ENCODE measurements at regions of chr5 and their contacts with region 1.

Region 1: GRCh38 chr5:177403792-177404640 is 3.6 kb upstream of the PFN3 start:
- DNase-seq: peak; percentile 83
- H3K4me3 ChIP-seq: peak overlapping the region; percentile 62
- H3K27ac ChIP-seq: no peak overlapping the region
- H3K4me1 ChIP-seq: peaks cover 18% of the 10 kb centered on the region
- CTCF ChIP-seq: peak; percentile 78

Region 2: GRCh38 chr5:176985516-176985915 is 418.5 kb before region 1 on chr5:
- CTCF ChIA-PET with region 1: no interaction called
- POLR2A ChIA-PET with region 1: no interaction called
- intact Hi-C with region 1: no loop called
- DNase-seq: peak; percentile 92
- H3K4me3 ChIP-seq: peak overlapping the region; percentile 50
- H3K27ac ChIP-seq: peak overlapping the region; percentile 95
- H3K4me1 ChIP-seq: peaks cover 66% of the 10 kb centered on the region
- CTCF ChIP-seq: no peak

Region 3: GRCh38 chr5:177362610-177363507 is 41.2 kb before region 1 on chr5:
- CTCF ChIA-PET with region 1: interaction called, 10 read pairs
- POLR2A ChIA-PET with region 1: no interaction called
- intact Hi-C with region 1: no loop called
- DNase-seq: peak; percentile 48
- H3K4me3 ChIP-seq: peak overlapping the region; percentile 60
- H3K27ac ChIP-seq: peak overlapping the region; percentile 84
- H3K4me1 ChIP-seq: peaks cover 62% of the 10 kb centered on the region
- CTCF ChIP-seq: no peak

Region 4: DNA sequence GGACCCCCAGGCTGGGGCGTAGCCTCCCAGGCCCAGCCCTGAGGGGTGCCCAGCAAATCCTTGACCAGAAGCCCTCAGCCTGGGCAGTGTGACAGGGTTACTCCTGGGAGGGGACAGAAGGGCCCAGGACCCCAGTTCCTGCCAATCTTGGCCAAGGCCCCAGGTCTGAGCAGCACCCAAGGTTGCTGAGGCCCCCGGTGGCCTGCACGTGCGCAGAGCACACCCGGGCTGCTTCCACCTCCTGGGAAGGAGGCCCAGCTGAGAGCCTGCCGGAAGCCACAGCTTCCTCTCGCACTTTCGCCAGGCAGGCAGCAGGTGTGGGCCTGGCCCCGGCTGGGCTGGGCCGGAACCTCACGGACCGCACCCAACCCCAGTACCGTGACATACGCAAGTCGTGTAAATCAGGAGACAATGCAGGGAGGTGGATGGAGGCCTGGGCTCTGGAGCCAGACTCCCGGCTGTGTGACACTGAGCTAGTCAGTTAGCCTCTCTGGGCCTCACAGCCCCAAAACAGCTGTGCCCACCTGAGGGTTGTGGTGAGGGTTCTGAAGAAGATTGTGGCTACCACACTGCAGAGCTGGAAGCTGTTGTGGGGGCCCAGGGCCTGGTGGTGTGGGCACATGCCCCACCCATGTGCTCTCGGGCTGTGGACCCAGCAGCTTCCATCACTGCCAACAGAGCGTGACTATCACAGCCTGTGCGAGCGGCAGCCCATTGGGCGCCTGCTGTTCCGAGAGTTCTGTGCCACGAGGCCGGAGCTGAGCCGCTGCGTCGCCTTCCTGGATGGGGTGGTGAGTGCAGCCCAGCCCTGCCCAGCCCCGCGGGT is 27.5 kb after region 1 on chr5:
- CTCF ChIA-PET with region 1: interaction called, 10 read pairs
- POLR2A ChIA-PET with region 1: interaction called, 10 read pairs
- intact Hi-C with region 1: loop called (anchors 1 kb)
- DNase-seq: peak; percentile 91
- H3K4me3 ChIP-seq: peak overlapping the region; percentile 77
- H3K27ac ChIP-seq: peak overlapping the region; percentile 87
- H3K4me1 ChIP-seq: peaks cover 54% of the 10 kb centered on the region
- CTCF ChIP-seq: no peak

Region 5: GRCh38 chr5:177446200-177447065 is 42.4 kb after region 1 on chr5 and contains the start of gene PRR7:
- CTCF ChIA-PET with region 1: interaction called, 3 read pairs
- POLR2A ChIA-PET with region 1: interaction called, 5 read pairs
- intact Hi-C with region 1: loop called (anchors 1 kb)
- DNase-seq: peak; percentile 87
- H3K4me3 ChIP-seq: peak within 1 kb of the TSS; percentile 72
- H3K27ac ChIP-seq: no peak within 1 kb of the TSS
- H3K4me1 ChIP-seq: peaks cover 47% of the 10 kb centered on the region
- CTCF ChIP-seq: no peak; the same call in 1 of the 2 replicates
- total RNA-seq, gene PRR7: 7.0 and 13.6 TPM in 2 replicates

Region 6: GRCh38 chr5:177454397-177455035 is 50.5 kb after region 1 on chr5:
- CTCF ChIA-PET with region 1: interaction called, 11 read pairs
- POLR2A ChIA-PET with region 1: interaction called, 5 read pairs
- intact Hi-C with region 1: loop called (anchors 1 kb)
- DNase-seq: peak; percentile 91
- H3K4me3 ChIP-seq: peak overlapping the region; percentile 76
- H3K27ac ChIP-seq: peak overlapping the region; percentile 90
- H3K4me1 ChIP-seq: peaks cover 28% of the 10 kb centered on the region
- CTCF ChIP-seq: peak; percentile 84

Region 7: GRCh38 chr5:177592010-177592834 is 188.2 kb after region 1 on chr5 and contains the start of gene TMED9:
- CTCF ChIA-PET with region 1: no interaction called
- POLR2A ChIA-PET with region 1: no interaction called
- intact Hi-C with region 1: loop called (anchors 10 kb)
- DNase-seq: peak; percentile 90
- H3K4me3 ChIP-seq: peak within 1 kb of the TSS; percentile 91
- H3K27ac ChIP-seq: peak within 1 kb of the TSS; percentile 73
- H3K4me1 ChIP-seq: peaks cover 16% of the 10 kb centered on the region
- CTCF ChIP-seq: no peak
- total RNA-seq, gene TMED9: 67.6 and 89.7 TPM in 2 replicates